Activated CD4-positive, alpha-beta T cell treated with anti-CD3 and anti-CD28 coated beads for 36 hours (primary cell): ENCODE measurements at regions of chr1 and their contacts with region 1.

Region 1: DNA sequence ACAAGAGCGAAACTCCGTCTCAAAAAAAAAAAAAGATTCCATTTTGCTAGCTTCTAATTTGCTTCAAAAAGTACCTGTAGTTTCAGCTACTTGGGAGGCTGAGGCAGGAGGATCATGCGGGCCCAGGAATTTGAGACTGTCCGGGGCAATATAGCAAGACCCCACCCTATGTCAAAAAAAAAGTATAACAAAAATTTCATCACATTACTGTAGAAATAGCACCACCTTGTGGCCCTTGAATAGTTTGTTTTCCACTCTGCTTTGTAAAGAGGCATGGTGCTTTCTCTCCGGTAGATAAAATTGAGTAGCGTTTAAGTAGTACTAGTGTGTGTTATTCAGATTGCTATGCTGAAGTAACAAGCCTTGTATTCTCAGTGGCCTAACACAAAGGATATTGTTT is 18.2 kb upstream of the MSTO1 start:
- DNase-seq: peak; percentile 17
- ATAC-seq: peak; percentile 75
- H3K4me3 Mint-ChIP-seq: no peak overlapping the region
- H3K27ac Mint-ChIP-seq: no peak overlapping the region
- H3K4me1 Mint-ChIP-seq: no peaks in the 10 kb centered on the region
- H3K27me3 Mint-ChIP-seq: no peaks in the 10 kb centered on the region

Region 2: GRCh38 chr1:154802982-154803920 is 788.5 kb before region 1 on chr1:
- CTCF ChIA-PET with region 1: no interaction called
- POLR2A ChIA-PET with region 1: no interaction called
- intact Hi-C with region 1: no loop called
- DNase-seq: no peak
- ATAC-seq: no peak
- H3K4me3 Mint-ChIP-seq: no peak overlapping the region
- H3K27ac Mint-ChIP-seq: no peak overlapping the region
- H3K4me1 Mint-ChIP-seq: no peaks in the 10 kb centered on the region
- H3K27me3 Mint-ChIP-seq: peaks cover 16% of the 10 kb centered on the region

Region 3: GRCh38 chr1:155208541-155209311 is 383.0 kb before region 1 on chr1 and contains the start of gene MTX1:
- CTCF ChIA-PET with region 1: no interaction called
- POLR2A ChIA-PET with region 1: no interaction called
- intact Hi-C with region 1: loop called (anchors 1 to 2 kb)
- DNase-seq: peak; percentile 93
- ATAC-seq: peak; percentile 87
- H3K4me3 Mint-ChIP-seq: peak within 1 kb of the TSS; percentile 89
- H3K27ac Mint-ChIP-seq: peak within 1 kb of the TSS; percentile 86
- H3K4me1 Mint-ChIP-seq: peaks cover 29% of the 10 kb centered on the region
- H3K27me3 Mint-ChIP-seq: no peaks in the 10 kb centered on the region
- total RNA-seq, gene MTX1: 52.8 to 52.9 TPM

Region 4: GRCh38 chr1:155352631-155353030 is 239.1 kb before region 1 on chr1:
- CTCF ChIA-PET with region 1: no interaction called
- POLR2A ChIA-PET with region 1: no interaction called
- intact Hi-C with region 1: loop called in 1 of 2 experiments (anchors 10 kb)
- DNase-seq: no peak
- ATAC-seq: no peak
- H3K4me3 Mint-ChIP-seq: no peak overlapping the region
- H3K27ac Mint-ChIP-seq: no peak overlapping the region
- H3K4me1 Mint-ChIP-seq: no peaks in the 10 kb centered on the region
- H3K27me3 Mint-ChIP-seq: no peaks in the 10 kb centered on the region